Activated CD8-positive, alpha-beta T cell treated with anti-CD3 and anti-CD28 coated beads for 36 hours (primary cell): ENCODE measurements at regions of chr7 and their contacts with region 1.

Region 1: GRCh38 chr7:129271500-129272355 is 46.9 kb downstream of the AHCYL2 start:
- DNase-seq: peak; percentile 80
- ATAC-seq: peak; percentile 100
- H3K4me3 Mint-ChIP-seq: peak overlapping the region; percentile 64
- H3K27ac Mint-ChIP-seq: peak overlapping the region; percentile 76
- H3K4me1 Mint-ChIP-seq: peaks cover 14% of the 10 kb centered on the region
- H3K27me3 Mint-ChIP-seq: no peaks in the 10 kb centered on the region
- CTCF ChIP-seq: peak; percentile 81

Region 2: GRCh38 chr7:129231666-129232065 is 40.1 kb before region 1 on chr7:
- CTCF ChIA-PET with region 1: interaction called, 320 read pairs
- POLR2A ChIA-PET with region 1: interaction called, 5 read pairs
- intact Hi-C with region 1: no loop called
- DNase-seq: no peak
- ATAC-seq: no peak
- H3K4me3 Mint-ChIP-seq: no peak overlapping the region
- H3K27ac Mint-ChIP-seq: no peak overlapping the region
- H3K4me1 Mint-ChIP-seq: peaks cover 6% of the 10 kb centered on the region
- H3K27me3 Mint-ChIP-seq: no peaks in the 10 kb centered on the region
- CTCF ChIP-seq: no peak

Region 3: GRCh38 chr7:129285111-129285510 is 13.4 kb after region 1 on chr7:
- CTCF ChIA-PET with region 1: interaction called, 54 read pairs
- POLR2A ChIA-PET with region 1: interaction called, 3 read pairs
- intact Hi-C with region 1: no loop called
- DNase-seq: no peak
- ATAC-seq: no peak
- H3K4me3 Mint-ChIP-seq: no peak overlapping the region
- H3K27ac Mint-ChIP-seq: no peak overlapping the region
- H3K4me1 Mint-ChIP-seq: no peaks in the 10 kb centered on the region
- H3K27me3 Mint-ChIP-seq: no peaks in the 10 kb centered on the region
- CTCF ChIP-seq: no peak

Region 4: DNA sequence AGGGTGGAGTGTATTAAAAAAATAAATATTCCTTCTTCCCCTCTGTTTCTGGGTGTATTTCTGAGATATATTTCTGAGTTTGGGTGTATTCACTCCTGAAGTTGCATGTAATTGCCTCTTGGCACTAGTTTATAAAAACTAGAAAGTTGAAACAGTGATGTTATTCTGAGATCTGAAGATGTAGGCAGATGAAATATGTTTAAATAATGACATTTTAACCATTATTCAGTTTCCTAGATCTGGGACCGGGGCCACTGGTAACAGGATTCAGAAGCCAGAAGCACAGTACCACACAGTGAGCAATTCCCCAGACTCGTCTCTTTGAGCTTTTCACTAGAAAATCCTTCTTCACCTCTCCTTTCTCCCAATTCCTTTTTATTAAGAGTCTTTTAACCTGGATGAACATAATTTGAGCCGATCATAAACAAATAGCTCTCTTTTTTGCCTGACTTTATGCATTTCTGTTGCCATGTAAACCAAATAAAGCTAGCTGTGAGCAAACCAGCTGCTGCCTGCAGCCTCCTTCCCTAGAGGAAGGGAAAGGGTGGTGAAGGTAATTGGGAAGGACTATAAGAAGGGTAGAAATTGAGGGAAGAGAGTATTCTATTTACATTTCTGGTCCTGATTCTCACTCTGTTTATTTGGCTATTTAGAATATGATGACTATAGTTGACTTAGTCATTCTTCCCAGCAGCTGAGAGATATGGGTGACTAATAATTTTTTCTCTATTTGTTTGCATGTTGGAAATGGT is 60.7 kb after region 1 on chr7:
- CTCF ChIA-PET with region 1: interaction called, 10 read pairs
- POLR2A ChIA-PET with region 1: no interaction called
- intact Hi-C with region 1: no loop called
- DNase-seq: no peak
- ATAC-seq: no peak
- H3K4me3 Mint-ChIP-seq: no peak overlapping the region
- H3K27ac Mint-ChIP-seq: no peak overlapping the region
- H3K4me1 Mint-ChIP-seq: no peaks in the 10 kb centered on the region
- H3K27me3 Mint-ChIP-seq: no peaks in the 10 kb centered on the region
- CTCF ChIP-seq: no peak